Activated CD8-positive, alpha-beta memory T cell treated with anti-CD3 and anti-CD28 coated beads, Interleukin-2, amount 10 ng/mL, durations not matched to agents 7 days and 5 days (primary cell): ENCODE measurements at regions of chr10 and their contacts with region 1.

Region 1: GRCh38 chr10:27558612-27559020 is 54.5 kb downstream of the RAB18 start:
- DNase-seq: peak; percentile 55
- ATAC-seq: peak; percentile 49
- H3K4me3 Mint-ChIP-seq: no peak overlapping the region
- H3K27ac Mint-ChIP-seq: no peak overlapping the region
- H3K4me1 Mint-ChIP-seq: no peaks in the 10 kb centered on the region
- H3K27me3 Mint-ChIP-seq: no peaks in the 10 kb centered on the region

Region 2: DNA sequence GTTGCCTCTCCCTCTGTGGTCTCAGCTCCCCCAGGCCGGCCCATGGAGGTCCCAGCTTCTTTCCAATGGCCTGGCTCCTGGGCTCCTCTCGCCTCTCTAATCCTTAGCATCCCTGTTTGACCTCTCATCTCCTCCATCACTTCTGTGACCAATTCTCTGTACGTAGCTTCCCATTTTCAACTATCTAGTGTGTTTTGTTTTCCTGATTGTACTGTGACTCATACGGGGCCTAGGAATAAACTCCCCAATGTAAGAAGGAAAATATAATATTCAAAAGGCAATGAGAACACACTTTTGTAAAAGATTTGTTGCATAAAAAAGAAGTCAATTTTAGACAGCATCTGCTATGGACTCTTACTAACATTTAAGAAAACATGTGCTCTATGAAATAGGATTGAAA is 96.7 kb after region 1 on chr10:
- CTCF ChIA-PET with region 1: interaction called, 10 read pairs
- DNase-seq: no peak
- ATAC-seq: no peak
- H3K4me3 Mint-ChIP-seq: no peak overlapping the region
- H3K27ac Mint-ChIP-seq: no peak overlapping the region
- H3K4me1 Mint-ChIP-seq: peaks cover 2% of the 10 kb centered on the region
- H3K27me3 Mint-ChIP-seq: peaks cover 8% of the 10 kb centered on the region